ENCODE measurements at regions of chr11 and their contacts with region 1.

Region 1: GRCh38 chr11:69296890-69297786 is 3.2 kb downstream of the MYEOV start:
- DNase-seq: peak; percentile 89
- H3K4me3 Mint-ChIP-seq: no peak overlapping the region
- H3K27ac Mint-ChIP-seq: no peak overlapping the region
- H3K4me1 Mint-ChIP-seq: peaks cover 48% of the 10 kb centered on the region
- H3K27me3 Mint-ChIP-seq: no peaks in the 10 kb centered on the region

Region 2: GRCh38 chr11:69101115-69101791 is 195.9 kb before region 1 on chr11:
- CTCF ChIA-PET with region 1: interaction called, 5 read pairs
- intact Hi-C with region 1: loop called (anchors 1 kb)
- DNase-seq: peak; percentile 81
- H3K4me3 Mint-ChIP-seq: no peak overlapping the region
- H3K27ac Mint-ChIP-seq: no peak overlapping the region
- H3K4me1 Mint-ChIP-seq: peaks cover 4% of the 10 kb centered on the region
- H3K27me3 Mint-ChIP-seq: peaks cover 3% of the 10 kb centered on the region

Region 3: DNA sequence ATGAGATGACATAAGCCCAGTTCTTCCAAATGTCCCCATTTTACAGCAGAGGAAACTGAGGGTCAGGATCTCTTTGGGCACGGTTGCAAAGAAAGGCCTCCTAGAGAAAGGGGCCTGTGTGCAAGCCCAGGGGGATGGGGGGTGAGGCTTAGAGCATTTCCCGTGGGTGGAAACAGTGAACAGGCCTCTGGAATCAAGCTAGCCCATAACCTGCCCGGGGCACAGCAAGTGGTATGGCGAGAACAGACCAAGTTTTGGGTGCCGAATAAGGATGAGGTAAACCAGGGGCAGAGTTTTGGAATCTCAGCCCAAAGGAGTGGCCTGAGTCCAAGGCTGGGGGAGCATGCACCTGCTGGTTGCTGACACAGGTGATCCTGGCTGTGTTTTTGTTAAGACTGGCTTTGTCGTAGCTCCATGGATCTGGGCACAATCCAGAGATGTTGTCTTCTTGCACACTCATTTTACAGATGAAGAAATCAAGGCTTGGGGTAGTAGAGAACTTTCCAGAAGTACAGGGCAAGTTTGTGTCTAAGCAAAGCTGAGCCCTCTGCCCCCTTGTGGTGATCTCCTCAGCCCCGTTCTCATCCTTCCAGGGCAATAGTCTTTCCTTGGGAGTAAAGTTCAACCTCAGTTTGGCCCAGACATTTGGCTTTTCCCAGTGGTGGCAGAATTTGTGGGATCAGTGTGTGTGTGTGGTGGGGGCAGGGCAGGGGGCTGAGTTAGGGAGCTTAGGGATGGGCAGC is 56.6 kb before region 1 on chr11:
- CTCF ChIA-PET with region 1: interaction called, 4 read pairs
- intact Hi-C with region 1: loop called (anchors 1 kb)
- DNase-seq: peak; percentile 38
- H3K4me3 Mint-ChIP-seq: no peak overlapping the region
- H3K27ac Mint-ChIP-seq: no peak overlapping the region
- H3K4me1 Mint-ChIP-seq: peaks cover 31% of the 10 kb centered on the region
- H3K27me3 Mint-ChIP-seq: no peaks in the 10 kb centered on the region

Region 4: GRCh38 chr11:69337211-69337721 is 40.1 kb after region 1 on chr11:
- CTCF ChIA-PET with region 1: no interaction called
- intact Hi-C with region 1: loop called (anchors 1 kb)
- DNase-seq: peak; percentile 53
- H3K4me3 Mint-ChIP-seq: no peak overlapping the region
- H3K27ac Mint-ChIP-seq: peak overlapping the region; percentile 63
- H3K4me1 Mint-ChIP-seq: peaks cover 42% of the 10 kb centered on the region
- H3K27me3 Mint-ChIP-seq: no peaks in the 10 kb centered on the region

Region 5: DNA sequence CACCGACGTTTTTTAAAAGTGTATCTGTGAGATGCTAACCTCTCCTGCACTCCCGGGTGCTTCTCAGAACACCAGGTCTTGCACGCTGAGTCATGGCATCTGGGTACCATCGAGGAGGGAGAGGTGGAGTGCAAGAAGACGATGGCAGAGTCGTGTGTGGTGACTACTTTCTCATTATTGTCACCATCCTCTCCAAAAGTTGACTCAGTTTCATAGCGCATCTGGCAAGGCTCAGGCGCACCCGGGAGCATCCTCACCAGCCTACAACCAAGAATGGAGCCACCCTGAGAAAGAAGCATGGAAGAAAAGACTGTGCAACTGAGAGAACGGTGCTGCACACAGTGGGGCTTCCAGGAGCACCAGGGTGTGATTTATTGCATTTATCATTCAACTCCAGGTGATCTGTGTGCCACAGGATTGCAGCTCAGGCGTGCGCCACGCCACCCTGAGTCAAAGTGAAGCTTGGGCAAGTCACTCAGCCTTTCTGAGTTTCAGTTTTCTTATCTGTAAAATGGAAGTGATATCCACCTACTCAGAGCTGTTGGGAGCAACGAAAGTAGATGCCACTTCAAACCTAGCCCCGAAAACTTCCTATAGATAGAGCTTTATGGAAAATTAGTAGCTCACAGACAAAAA is 249.7 kb after region 1 on chr11:
- CTCF ChIA-PET with region 1: interaction called, 3 read pairs
- intact Hi-C with region 1: loop called (anchors 2 kb)
- DNase-seq: peak; percentile 71
- H3K4me3 Mint-ChIP-seq: no peak overlapping the region
- H3K27ac Mint-ChIP-seq: no peak overlapping the region
- H3K4me1 Mint-ChIP-seq: peaks cover 21% of the 10 kb centered on the region
- H3K27me3 Mint-ChIP-seq: peaks cover 26% of the 10 kb centered on the region

Measured in activated naive CD4-positive, alpha-beta T cell treated with anti-CD3 and anti-CD28 coated beads for 36 hours (primary cell).